GM12878 (cell line): ENCODE measurements at regions of chr1 and their contacts with region 1.

Region 1: GRCh38 chr1:86499987-86500593 is 31.4 kb downstream of the CLCA1 start:
- DNase-seq: no peak
- ATAC-seq: peak; percentile 41; the same call in 1 of the 3 replicates
- H3K4me3 ChIP-seq: no peak overlapping the region
- H3K27ac ChIP-seq: no peak overlapping the region
- H3K4me1 ChIP-seq: no peaks in the 10 kb centered on the region
- H3K27me3 ChIP-seq: peaks cover 0 to 2% of the 10 kb centered on the region in 2 experiments; a peak in 2 of 4 replicates
- CTCF ChIP-seq: peak; percentile 65 to 90 (median 82); a peak in 5 of 6 replicates
- EP300 ChIP-seq: no peak
- POLR2A ChIP-seq: no peak
- RAD21 ChIP-seq: no peak

Region 2: GRCh38 chr1:86380257-86380861 is 119.7 kb before region 1 on chr1:
- CTCF ChIA-PET with region 1: interaction called, 104 read pairs
- POLR2A ChIA-PET with region 1: interaction called, 3 read pairs
- RAD21 ChIA-PET with region 1: interaction called, 9 read pairs
- SMC1A ChIA-PET with region 1: interaction called, 16 read pairs
- in situ Hi-C with region 1: loop called (anchors 5 kb)
- intact Hi-C with region 1: loop called (anchors 1 kb)
- DNase-seq: peak; percentile 45
- ATAC-seq: peak; percentile 78
- H3K4me3 ChIP-seq: 0 out of 2 replicates have a peak overlapping the region, but pooled peaks have one; percentile 3
- H3K27ac ChIP-seq: 0 out of 2 replicates have a peak overlapping the region, but pooled peaks have one; percentile 6
- H3K4me1 ChIP-seq: no peaks in the 10 kb centered on the region
- H3K27me3 ChIP-seq: no peaks in the 10 kb centered on the region
- CTCF ChIP-seq: peak; percentile 64 to 84 (median 66); a peak in 5 of 6 replicates
- EP300 ChIP-seq: no peak
- POLR2A ChIP-seq: no peak
- RAD21 ChIP-seq: peak; percentile 86

Region 3: DNA sequence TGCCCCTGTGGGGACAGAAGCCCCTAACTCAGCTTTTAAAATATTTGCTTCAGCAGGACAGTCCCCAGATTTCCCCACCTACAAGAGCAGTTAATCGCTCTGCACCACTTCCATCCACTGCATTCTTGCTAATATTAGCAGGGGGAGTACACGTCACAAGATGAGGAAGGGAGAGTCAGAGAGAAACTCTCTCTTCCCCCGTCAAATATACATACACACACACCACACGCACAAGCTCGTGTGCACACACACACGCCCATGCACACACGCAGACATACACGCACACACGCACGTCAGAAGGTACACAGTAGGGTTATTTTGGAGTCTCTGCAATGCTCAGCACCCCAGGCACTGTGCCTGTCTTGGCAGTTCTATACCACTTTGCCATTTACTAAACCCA is 29.2 kb before region 1 on chr1:
- CTCF ChIA-PET with region 1: interaction called, 40 read pairs
- POLR2A ChIA-PET with region 1: no interaction called
- RAD21 ChIA-PET with region 1: no interaction called
- SMC1A ChIA-PET with region 1: interaction called, 4 read pairs
- in situ Hi-C with region 1: no loop called
- intact Hi-C with region 1: loop called (anchors 1 kb)
- DNase-seq: no peak
- ATAC-seq: peak; percentile 66
- H3K4me3 ChIP-seq: no peak overlapping the region
- H3K27ac ChIP-seq: no peak overlapping the region
- H3K4me1 ChIP-seq: peaks cover 3% of the 10 kb centered on the region; the same call in 1 of the 2 replicates
- H3K27me3 ChIP-seq: no peaks in the 10 kb centered on the region; a peak in 2 of 4 replicates
- CTCF ChIP-seq: no peak
- EP300 ChIP-seq: no peak
- POLR2A ChIP-seq: no peak
- RAD21 ChIP-seq: no peak

Region 4: DNA sequence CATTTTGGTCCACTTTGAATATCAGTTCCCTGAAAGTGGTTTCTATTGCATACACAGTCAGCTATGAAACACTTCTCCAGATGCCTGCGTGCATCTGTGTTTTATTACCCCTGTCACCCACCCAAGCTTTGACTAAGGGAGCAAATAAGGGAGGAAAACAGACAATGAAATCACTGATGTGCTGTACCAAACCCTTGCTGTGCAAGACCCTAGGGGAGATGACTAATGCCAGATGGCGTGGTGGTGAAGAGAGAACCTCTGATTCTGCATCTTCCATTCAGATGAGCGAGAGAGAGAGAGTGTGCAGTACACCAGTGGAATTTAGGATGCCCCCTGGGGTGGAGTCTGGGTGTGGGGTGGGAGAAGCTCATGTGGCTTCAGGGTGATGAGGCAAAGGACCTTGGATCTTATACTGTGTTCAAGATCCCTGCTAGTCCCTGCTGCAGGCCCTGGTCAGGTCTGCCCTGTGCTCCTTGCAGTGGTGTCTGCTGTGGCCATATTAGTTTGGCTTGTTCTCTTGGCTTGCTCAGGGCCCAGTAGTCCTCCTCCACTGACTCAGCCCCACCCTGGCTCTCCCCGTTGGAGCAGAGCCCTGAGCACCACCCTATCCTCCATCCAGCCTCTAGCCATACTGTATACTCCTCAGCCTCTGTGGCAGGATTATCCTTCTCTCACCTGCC is 12.8 kb before region 1 on chr1:
- CTCF ChIA-PET with region 1: interaction called, 45 read pairs
- POLR2A ChIA-PET with region 1: no interaction called
- RAD21 ChIA-PET with region 1: no interaction called
- SMC1A ChIA-PET with region 1: interaction called, 3 read pairs
- in situ Hi-C with region 1: no loop called
- intact Hi-C with region 1: no loop called
- DNase-seq: no peak
- ATAC-seq: no peak
- H3K4me3 ChIP-seq: no peak overlapping the region
- H3K27ac ChIP-seq: no peak overlapping the region
- H3K4me1 ChIP-seq: no peaks in the 10 kb centered on the region
- H3K27me3 ChIP-seq: peaks cover 1 to 2% of the 10 kb centered on the region in 2 experiments; a peak in 2 of 4 replicates
- CTCF ChIP-seq: no peak
- EP300 ChIP-seq: no peak
- POLR2A ChIP-seq: no peak
- RAD21 ChIP-seq: no peak

Region 5: DNA sequence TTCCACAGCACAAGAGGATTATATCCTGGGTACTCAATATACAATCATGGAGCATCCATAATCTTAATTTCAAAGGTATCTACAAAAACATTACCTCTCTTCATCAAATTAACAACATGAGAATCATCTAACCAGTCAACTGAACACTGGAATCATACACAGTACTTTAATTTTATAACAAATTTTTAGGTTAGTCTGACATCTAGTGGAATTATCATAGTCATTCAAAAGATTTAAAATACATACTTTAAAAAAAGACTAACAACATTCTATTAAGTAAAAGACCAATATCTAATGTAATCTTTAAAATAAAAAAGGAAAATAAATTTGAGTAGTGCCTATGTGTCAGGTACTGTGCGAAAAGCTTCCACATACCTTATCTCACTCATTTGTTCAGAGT is 187.5 kb after region 1 on chr1:
- CTCF ChIA-PET with region 1: interaction called, 5 read pairs
- POLR2A ChIA-PET with region 1: no interaction called
- RAD21 ChIA-PET with region 1: no interaction called
- SMC1A ChIA-PET with region 1: no interaction called
- in situ Hi-C with region 1: no loop called
- intact Hi-C with region 1: loop called (anchors 5 kb)
- DNase-seq: no peak
- ATAC-seq: no peak
- H3K4me3 ChIP-seq: no peak overlapping the region
- H3K27ac ChIP-seq: no peak overlapping the region
- H3K4me1 ChIP-seq: no peaks in the 10 kb centered on the region
- H3K27me3 ChIP-seq: no peaks in the 10 kb centered on the region
- CTCF ChIP-seq: no peak; a peak in 1 of 6 replicates
- EP300 ChIP-seq: no peak
- POLR2A ChIP-seq: no peak
- RAD21 ChIP-seq: no peak

Region 6: DNA sequence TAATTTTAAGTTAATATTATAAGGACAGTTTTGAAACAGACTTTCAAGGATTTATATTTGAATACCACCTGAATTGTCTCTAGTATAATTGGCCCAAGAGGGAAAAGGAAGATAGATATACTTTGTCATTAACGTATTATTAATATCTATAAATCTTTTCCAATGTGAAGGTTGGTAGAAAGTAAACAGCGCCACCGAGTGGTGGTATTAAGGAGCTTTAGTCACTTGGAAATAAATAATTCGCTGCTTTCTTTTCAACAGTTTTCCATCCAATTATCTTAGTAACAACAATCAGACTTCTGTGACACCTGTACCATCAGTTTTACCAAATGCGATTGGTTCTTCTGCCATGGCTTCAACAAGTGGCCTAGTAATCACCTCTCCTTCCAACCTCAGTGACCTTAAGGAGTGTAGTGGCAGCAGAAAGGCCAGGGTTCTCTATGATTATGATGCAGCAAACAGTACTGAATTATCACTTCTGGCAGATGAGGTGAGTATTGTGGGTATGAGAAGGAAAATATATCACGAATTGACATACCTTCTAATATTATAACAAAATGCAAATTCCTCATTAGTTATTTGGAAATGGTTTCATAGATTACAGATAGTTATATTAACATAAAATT is 242.0 kb after region 1 on chr1:
- CTCF ChIA-PET with region 1: interaction called, 4 read pairs
- POLR2A ChIA-PET with region 1: no interaction called
- RAD21 ChIA-PET with region 1: no interaction called
- SMC1A ChIA-PET with region 1: interaction called, 4 read pairs
- in situ Hi-C with region 1: no loop called
- intact Hi-C with region 1: loop called (anchors 5 kb)
- DNase-seq: no peak
- ATAC-seq: peak; percentile 45; the same call in 1 of the 3 replicates
- H3K4me3 ChIP-seq: no peak overlapping the region
- H3K27ac ChIP-seq: no peak overlapping the region
- H3K4me1 ChIP-seq: no peaks in the 10 kb centered on the region
- H3K27me3 ChIP-seq: no peaks in the 10 kb centered on the region
- CTCF ChIP-seq: peak; percentile 39 to 51 (median 46); a peak in 5 of 6 replicates
- EP300 ChIP-seq: no peak
- POLR2A ChIP-seq: no peak
- RAD21 ChIP-seq: peak; percentile 55